PC-3 (cell line): ENCODE measurements at regions of chr21 and their contacts with region 1.

Region 1: GRCh38 chr21:32569261-32570230 is 15.8 kb downstream of the TCP10L start:
- DNase-seq: peak; percentile 88
- ATAC-seq: peak; percentile 94
- H3K4me3 ChIP-seq: peak overlapping the region; percentile 81
- H3K27ac ChIP-seq: peak overlapping the region; percentile 85
- H3K4me1 ChIP-seq: peaks cover 11% of the 10 kb centered on the region
- H3K27me3 ChIP-seq: no peaks in the 10 kb centered on the region
- CTCF ChIP-seq: peak; percentile 91

Region 2: DNA sequence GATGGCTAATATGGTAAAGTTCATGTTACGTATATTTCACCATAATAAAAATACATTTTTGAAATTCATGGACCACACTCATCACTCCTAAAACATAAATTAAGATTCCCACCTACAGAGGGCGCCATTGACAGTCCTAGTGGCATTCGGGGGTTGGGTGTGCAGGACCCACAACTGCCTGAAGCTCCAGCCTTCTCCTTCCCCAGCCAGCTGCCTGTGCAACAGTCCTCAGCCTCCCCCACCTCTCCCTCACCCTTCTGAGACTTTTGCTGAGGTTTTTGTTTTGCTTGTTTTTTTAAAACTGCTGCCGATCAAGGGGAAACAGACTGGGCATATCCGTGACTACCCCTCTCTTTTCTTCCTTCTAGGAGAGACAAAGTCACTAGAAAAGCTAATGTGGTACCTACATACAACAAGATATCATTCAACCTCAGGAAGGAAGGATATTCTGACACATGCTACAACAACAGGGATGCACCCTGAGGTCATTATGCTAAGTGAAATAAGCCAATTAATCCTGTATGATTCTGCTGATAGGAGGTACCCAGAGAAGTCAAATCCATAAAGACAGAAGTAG is 166.3 kb before region 1 on chr21:
- CTCF ChIA-PET with region 1: interaction called, 18 read pairs
- POLR2A ChIA-PET with region 1: no interaction called
- intact Hi-C with region 1: loop called (anchors 1 kb)
- DNase-seq: peak; percentile 88
- ATAC-seq: peak; percentile 93
- H3K4me3 ChIP-seq: no peak overlapping the region
- H3K27ac ChIP-seq: no peak overlapping the region
- H3K4me1 ChIP-seq: no peaks in the 10 kb centered on the region
- H3K27me3 ChIP-seq: no peaks in the 10 kb centered on the region
- CTCF ChIP-seq: peak; percentile 90

Region 3: GRCh38 chr21:32494934-32495703 is 74.4 kb before region 1 on chr21:
- CTCF ChIA-PET with region 1: no interaction called
- POLR2A ChIA-PET with region 1: no interaction called
- intact Hi-C with region 1: loop called (anchors 5 kb)
- DNase-seq: peak; percentile 89
- ATAC-seq: peak; percentile 96
- H3K4me3 ChIP-seq: peak overlapping the region; percentile 10; the same call in 1 of the 2 replicates
- H3K27ac ChIP-seq: peak overlapping the region; percentile 94
- H3K4me1 ChIP-seq: peaks cover 34% of the 10 kb centered on the region
- H3K27me3 ChIP-seq: no peaks in the 10 kb centered on the region
- CTCF ChIP-seq: no peak